ENCODE measurements at regions of chr17 and their contacts with region 1.

Region 1: GRCh38 chr17:63425482-63425881 is 20.6 kb downstream of the CYB561 start:
- DNase-seq: peak; percentile 83
- ATAC-seq: peak; percentile 62
- H3K4me3 Mint-ChIP-seq: no peak overlapping the region
- H3K27ac Mint-ChIP-seq: no peak overlapping the region
- H3K4me1 Mint-ChIP-seq: peaks cover 35% of the 10 kb centered on the region
- H3K27me3 Mint-ChIP-seq: no peaks in the 10 kb centered on the region
- CTCF ChIP-seq: peak; percentile 66

Region 2: GRCh38 chr17:63249256-63250004 is 176.1 kb before region 1 on chr17:
- CTCF ChIA-PET with region 1: no interaction called
- POLR2A ChIA-PET with region 1: no interaction called
- DNase-seq: no peak
- ATAC-seq: no peak
- H3K4me3 Mint-ChIP-seq: no peak overlapping the region
- H3K27ac Mint-ChIP-seq: peak overlapping the region; percentile 70
- H3K4me1 Mint-ChIP-seq: peaks cover 4% of the 10 kb centered on the region
- H3K27me3 Mint-ChIP-seq: no peaks in the 10 kb centered on the region
- CTCF ChIP-seq: no peak

Region 3: GRCh38 chr17:63406689-63407330 is 18.7 kb before region 1 on chr17:
- CTCF ChIA-PET with region 1: interaction called, 56 read pairs
- POLR2A ChIA-PET with region 1: no interaction called
- DNase-seq: peak; percentile 75
- ATAC-seq: peak; percentile 93
- H3K4me3 Mint-ChIP-seq: no peak overlapping the region
- H3K27ac Mint-ChIP-seq: no peak overlapping the region
- H3K4me1 Mint-ChIP-seq: peaks cover 2% of the 10 kb centered on the region
- H3K27me3 Mint-ChIP-seq: no peaks in the 10 kb centered on the region
- CTCF ChIP-seq: peak; percentile 72

Region 4: DNA sequence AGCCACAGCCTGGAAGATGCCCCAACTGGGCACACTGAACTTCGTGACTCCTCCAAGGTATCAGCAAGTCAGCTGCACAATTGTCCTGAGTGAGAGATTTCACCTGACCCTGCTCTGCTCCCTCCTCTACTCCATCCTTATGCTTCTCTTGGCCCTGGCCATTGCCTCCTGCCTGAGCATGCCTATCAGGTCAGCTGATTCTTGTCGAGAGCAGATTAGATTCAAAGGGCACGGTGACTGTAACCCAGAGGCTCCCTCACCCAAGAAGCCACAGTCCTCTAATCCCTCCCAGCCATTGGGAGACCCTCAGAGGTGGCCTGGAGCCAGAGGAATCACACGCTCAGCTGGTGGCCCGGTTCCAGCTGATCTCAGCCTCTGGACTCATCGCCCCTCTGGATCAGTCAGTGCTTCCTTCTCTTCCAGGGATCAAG is 27.6 kb after region 1 on chr17:
- CTCF ChIA-PET with region 1: interaction called, 89 read pairs
- POLR2A ChIA-PET with region 1: no interaction called
- DNase-seq: no peak
- ATAC-seq: no peak
- H3K4me3 Mint-ChIP-seq: no peak overlapping the region
- H3K27ac Mint-ChIP-seq: no peak overlapping the region
- H3K4me1 Mint-ChIP-seq: peaks cover 25% of the 10 kb centered on the region
- H3K27me3 Mint-ChIP-seq: peaks cover 11% of the 10 kb centered on the region
- CTCF ChIP-seq: no peak

Region 5: GRCh38 chr17:63503334-63503692 is 77.8 kb after region 1 on chr17:
- CTCF ChIA-PET with region 1: interaction called, 44 read pairs
- POLR2A ChIA-PET with region 1: no interaction called
- DNase-seq: no peak
- ATAC-seq: no peak
- H3K4me3 Mint-ChIP-seq: no peak overlapping the region
- H3K27ac Mint-ChIP-seq: no peak overlapping the region
- H3K4me1 Mint-ChIP-seq: peaks cover 4% of the 10 kb centered on the region
- H3K27me3 Mint-ChIP-seq: peaks cover 12% of the 10 kb centered on the region
- CTCF ChIP-seq: no peak

Region 6: GRCh38 chr17:63571763-63572271 is 146.3 kb after region 1 on chr17:
- CTCF ChIA-PET with region 1: interaction called, 19 read pairs
- POLR2A ChIA-PET with region 1: no interaction called
- DNase-seq: no peak
- ATAC-seq: no peak
- H3K4me3 Mint-ChIP-seq: no peak overlapping the region
- H3K27ac Mint-ChIP-seq: peak overlapping the region; percentile 35; the same call in 1 of the 2 replicates
- H3K4me1 Mint-ChIP-seq: no peaks in the 10 kb centered on the region
- H3K27me3 Mint-ChIP-seq: no peaks in the 10 kb centered on the region
- CTCF ChIP-seq: no peak

Region 7: DNA sequence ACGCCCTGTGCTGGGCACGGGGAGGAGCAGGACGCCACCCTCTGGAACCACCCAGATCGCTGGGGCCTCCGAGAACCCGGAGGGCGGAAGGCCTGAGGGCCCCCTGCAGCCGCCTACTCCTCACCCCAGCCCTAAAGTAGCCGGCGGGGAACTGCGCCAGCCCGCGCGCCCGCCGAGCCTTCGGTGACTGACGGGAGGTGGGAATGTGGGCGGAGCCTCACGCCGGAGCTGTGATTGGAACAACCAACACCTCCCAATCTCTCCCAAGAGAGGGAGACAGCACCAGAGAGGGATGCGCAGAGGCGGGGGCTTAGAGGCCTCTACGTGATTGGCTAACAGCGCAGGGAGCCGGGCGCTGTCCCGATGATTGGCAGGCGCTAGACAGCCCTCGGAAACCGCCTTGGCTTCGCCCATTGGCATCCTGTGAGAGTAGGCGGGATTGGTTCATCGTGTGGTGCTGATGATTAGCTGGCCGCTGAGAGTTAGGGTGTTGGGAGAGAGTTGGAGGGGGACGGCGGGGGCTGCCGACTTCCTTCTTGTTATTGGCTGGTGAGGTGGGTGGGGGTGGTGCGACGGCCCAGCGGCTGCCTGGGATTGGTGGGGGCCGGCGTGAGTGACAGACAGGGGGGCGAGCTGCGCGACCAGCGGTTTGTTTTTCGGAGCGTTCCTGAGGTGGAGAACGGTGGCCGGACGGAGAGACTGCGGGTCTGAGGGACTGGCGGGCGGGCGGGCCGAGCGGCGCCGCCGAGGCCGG is 196.5 kb after region 1 on chr17 and contains the start of gene MAP3K3:
- CTCF ChIA-PET with region 1: interaction called, 38 read pairs
- POLR2A ChIA-PET with region 1: no interaction called
- DNase-seq: peak; percentile 99
- ATAC-seq: peak; percentile 91
- H3K4me3 Mint-ChIP-seq: peak within 1 kb of the TSS; percentile 98
- H3K27ac Mint-ChIP-seq: peak within 1 kb of the TSS; percentile 91
- H3K4me1 Mint-ChIP-seq: peaks cover 25% of the 10 kb centered on the region
- H3K27me3 Mint-ChIP-seq: no peaks in the 10 kb centered on the region; the same call in 1 of the 2 replicates
- CTCF ChIP-seq: no peak
- total RNA-seq, gene MAP3K3: 21.8 to 25.7 TPM (median 22.5 TPM) in 3 replicates

Region 8: DNA sequence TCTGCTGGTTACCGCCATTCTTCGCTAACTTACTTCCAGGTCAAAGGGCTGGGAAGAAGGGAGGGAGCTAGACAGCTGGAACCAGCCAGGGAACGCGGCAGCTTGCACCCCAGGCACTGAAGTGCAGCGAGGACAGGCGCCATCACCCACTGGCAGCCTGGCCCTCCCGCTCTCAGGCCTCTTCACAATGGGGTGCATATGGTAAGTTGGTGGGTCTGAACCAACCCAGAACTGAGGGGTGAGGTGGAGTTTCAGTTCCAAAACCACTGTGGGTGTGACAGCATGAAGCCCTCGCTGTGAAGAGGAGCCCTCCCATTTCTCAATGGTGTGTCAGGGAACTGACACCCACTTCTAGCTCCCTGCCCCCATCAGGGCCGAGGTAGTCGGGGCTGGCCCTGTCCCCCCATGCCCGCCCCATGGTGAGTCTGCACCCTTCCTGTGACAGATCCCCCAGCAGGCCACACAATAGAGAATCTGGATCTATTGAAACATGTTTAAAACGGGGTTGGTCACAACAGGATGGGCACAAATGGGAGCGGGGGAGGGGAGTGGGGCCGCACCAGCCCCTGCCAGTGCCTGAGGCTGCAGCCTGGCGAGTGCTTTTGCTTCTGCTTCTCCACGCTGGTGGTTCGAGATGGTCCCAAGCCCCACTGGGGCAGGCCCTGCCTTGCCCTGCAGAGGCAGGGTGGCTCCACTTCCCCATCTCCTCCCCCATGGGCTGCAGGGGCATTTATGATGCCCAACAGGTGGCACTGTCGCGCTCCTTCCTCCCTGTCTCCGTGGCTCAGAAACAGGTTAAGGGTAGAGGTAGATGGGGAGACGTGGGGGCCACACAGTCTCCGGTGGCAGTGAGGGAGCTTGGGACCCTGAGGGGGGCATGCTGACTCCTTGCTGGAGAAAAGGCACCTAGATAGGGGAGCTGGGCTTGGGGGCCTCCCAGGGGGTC is 272.1 kb after region 1 on chr17:
- CTCF ChIA-PET with region 1: interaction called, 23 read pairs
- POLR2A ChIA-PET with region 1: no interaction called
- DNase-seq: peak; percentile 70
- ATAC-seq: peak; percentile 3
- H3K4me3 Mint-ChIP-seq: peak overlapping the region; percentile 69
- H3K27ac Mint-ChIP-seq: peak overlapping the region; percentile 70
- H3K4me1 Mint-ChIP-seq: peaks cover 47% of the 10 kb centered on the region
- H3K27me3 Mint-ChIP-seq: peaks cover 6% of the 10 kb centered on the region; the same call in 1 of the 2 replicates
- CTCF ChIP-seq: peak; percentile 20